Gastrocnemius medialis (tissue), 4 donors: ENCODE measurements at regions of chr19 and their contacts with region 1.

Region 1: DNA sequence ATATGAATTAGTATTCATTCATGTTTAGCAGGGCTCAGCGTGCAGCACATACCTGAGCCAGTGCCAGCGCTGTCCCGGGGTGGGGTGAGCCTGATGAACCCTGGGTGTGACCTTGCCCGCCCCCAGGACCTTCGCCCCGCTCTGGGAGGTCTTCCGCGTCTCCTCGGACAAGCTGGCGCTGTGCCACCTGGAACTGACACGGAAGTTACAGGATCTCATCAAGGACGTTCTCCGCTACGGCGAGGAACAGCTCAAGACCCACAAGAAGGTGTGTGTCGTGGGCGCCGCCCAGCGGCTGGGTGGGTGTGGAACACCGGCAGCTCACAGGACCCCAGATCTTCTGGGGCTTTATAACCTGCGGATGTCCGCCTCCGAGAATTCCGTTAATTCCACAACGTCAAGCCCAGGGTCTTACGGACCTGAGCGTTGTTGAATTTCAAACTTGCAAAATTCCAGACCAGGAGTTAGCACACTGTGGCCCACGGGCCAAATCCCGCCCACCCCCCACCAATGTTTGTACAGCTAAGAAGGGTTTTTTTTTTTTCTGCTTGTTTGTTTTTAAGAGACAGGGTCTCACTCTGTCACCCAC is 15.4 kb downstream of the FCHO1 start:
- DNase-seq: peak; percentile 16 to 43
- ATAC-seq: no peak
- H3K4me3 ChIP-seq: peak overlapping the region in 1 of 4 donors; percentile 13
- H3K27ac ChIP-seq: no peak overlapping the region
- H3K4me1 ChIP-seq: peaks cover 0 to 3% of the 10 kb centered on the region in 2 donors
- H3K27me3 ChIP-seq: peaks cover 0 to 4% (median 4%) of the 10 kb centered on the region in 3 donors
- CTCF ChIP-seq: peak; percentile 35 to 71 (median 58)
- POLR2A ChIP-seq: no peak

Region 2: DNA sequence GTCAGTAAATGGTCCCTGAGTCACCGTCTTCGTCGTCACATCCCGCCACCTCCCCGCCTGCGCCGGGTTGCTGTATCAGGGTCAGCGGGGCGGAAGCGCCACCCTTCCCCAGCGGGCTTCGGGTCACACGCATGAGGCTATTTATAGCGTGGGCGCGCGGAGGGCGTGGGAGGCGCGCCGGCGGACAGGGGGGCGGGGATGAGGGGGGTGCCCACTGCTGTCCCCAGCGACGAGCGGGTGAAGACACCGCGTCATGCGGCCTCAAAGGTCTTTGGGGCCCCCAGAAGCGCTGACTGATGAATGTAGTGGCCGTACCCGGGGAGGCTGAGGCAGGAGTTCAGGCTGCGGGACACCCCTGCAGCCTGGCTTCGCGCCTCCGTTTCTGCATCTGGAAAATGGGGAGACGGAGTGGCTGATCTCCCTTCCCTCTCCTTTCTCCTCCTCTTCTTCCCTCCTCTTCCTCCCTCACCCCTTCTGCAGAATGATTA is 86.4 kb before region 1 on chr19:
- in situ Hi-C with region 1: no loop called
- intact Hi-C with region 1: no loop called
- DNase-seq: peak; percentile 25 to 39
- ATAC-seq: peak; percentile 65 to 76
- H3K4me3 ChIP-seq: peak overlapping the region; percentile 23 to 43 (median 38)
- H3K27ac ChIP-seq: no peak overlapping the region
- H3K4me1 ChIP-seq: peaks cover 7 to 12% of the 10 kb centered on the region in 2 donors
- H3K27me3 ChIP-seq: peaks cover 13 to 40% (median 16%) of the 10 kb centered on the region in 3 donors
- CTCF ChIP-seq: no peak
- POLR2A ChIP-seq: no peak

Region 3: GRCh38 chr19:17703824-17704463 is 62.7 kb before region 1 on chr19:
- in situ Hi-C with region 1: no loop called
- intact Hi-C with region 1: loop called (anchors 5 kb)
- DNase-seq: no peak
- ATAC-seq: no peak
- H3K4me3 ChIP-seq: no peak overlapping the region
- H3K27ac ChIP-seq: no peak overlapping the region
- H3K4me1 ChIP-seq: no peaks in the 10 kb centered on the region
- H3K27me3 ChIP-seq: peaks cover 0 to 11% (median 11%) of the 10 kb centered on the region in 3 donors
- CTCF ChIP-seq: peak; percentile 33 to 73 (median 56)
- POLR2A ChIP-seq: no peak

Region 4: GRCh38 chr19:17718947-17719711 is 47.5 kb before region 1 on chr19 and contains the start of gene MAP1S:
- in situ Hi-C with region 1: loop called in 1 of 4 experiments (anchors 10 kb)
- intact Hi-C with region 1: no loop called
- DNase-seq: peak in 1 of 2 donors; percentile 20
- ATAC-seq: peak in 1 of 2 donors; percentile 71
- H3K4me3 ChIP-seq: peak within 1 kb of the TSS; percentile 67 to 93 (median 79)
- H3K27ac ChIP-seq: peak within 1 kb of the TSS; percentile 66 to 87 (median 76)
- H3K4me1 ChIP-seq: peaks cover 27 to 29% of the 10 kb centered on the region in 2 donors
- H3K27me3 ChIP-seq: no peaks in the 10 kb centered on the region
- CTCF ChIP-seq: no peak
- POLR2A ChIP-seq: peak; percentile 65 to 73
- total RNA-seq, gene MAP1S: 20.0 to 61.5 (median 35.1) TPM